ENCODE measurements at regions of chr10 and their contacts with region 1.

Region 1: DNA sequence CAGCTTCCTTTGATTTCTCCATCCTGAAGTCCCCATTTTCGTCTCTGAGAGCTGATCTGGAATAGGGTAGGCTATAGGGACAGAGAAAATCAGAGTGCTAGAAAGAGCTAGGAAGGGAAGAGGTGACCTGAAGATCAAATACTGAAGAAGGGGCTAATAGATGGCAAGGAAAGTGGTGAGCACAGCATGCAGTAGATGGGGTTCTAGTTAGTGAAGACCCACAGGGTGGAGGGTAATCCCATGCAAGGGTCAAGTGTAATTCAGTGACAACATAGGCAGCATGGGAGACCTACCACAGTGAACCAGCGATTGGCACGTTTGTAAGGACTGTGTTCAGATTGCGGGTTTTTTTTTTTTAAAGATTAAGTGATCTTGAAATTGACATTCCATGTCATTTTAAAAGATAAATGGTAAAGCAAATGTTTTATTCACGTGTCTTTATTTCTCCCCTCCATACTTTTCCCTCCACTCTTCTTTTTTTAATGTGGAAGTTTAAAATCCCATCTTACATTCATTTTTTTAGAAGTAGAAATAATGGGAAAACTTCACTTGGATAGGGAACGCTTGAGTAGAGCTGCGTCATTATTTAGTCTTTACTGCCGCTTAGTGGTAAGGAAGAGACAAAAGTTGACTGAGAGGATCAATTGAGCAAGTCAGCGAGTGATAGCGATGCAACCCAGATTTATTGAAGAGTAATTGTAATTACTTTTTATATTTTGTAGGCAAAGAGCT is 21.0 kb upstream of the ABI1 start:
- DNase-seq: no peak
- ATAC-seq: peak; percentile 76
- H3K4me3 Mint-ChIP-seq: no peak overlapping the region
- H3K27ac Mint-ChIP-seq: no peak overlapping the region
- H3K4me1 Mint-ChIP-seq: peaks cover 5% of the 10 kb centered on the region
- H3K27me3 Mint-ChIP-seq: peaks cover 35% of the 10 kb centered on the region

Region 2: GRCh38 chr10:26334932-26335573 is 546.7 kb before region 1 on chr10:
- CTCF ChIA-PET with region 1: interaction called, 22 read pairs
- DNase-seq: peak; percentile 76
- ATAC-seq: peak; percentile 91
- H3K4me3 Mint-ChIP-seq: peak overlapping the region; percentile 73
- H3K27ac Mint-ChIP-seq: peak overlapping the region; percentile 81
- H3K4me1 Mint-ChIP-seq: peaks cover 8% of the 10 kb centered on the region
- H3K27me3 Mint-ChIP-seq: no peaks in the 10 kb centered on the region

Region 3: GRCh38 chr10:26685441-26685840 is 196.3 kb before region 1 on chr10:
- CTCF ChIA-PET with region 1: interaction called, 10 read pairs
- DNase-seq: no peak
- ATAC-seq: no peak
- H3K4me3 Mint-ChIP-seq: no peak overlapping the region
- H3K27ac Mint-ChIP-seq: no peak overlapping the region
- H3K4me1 Mint-ChIP-seq: peaks cover 7% of the 10 kb centered on the region
- H3K27me3 Mint-ChIP-seq: peaks cover 10% of the 10 kb centered on the region

Region 4: DNA sequence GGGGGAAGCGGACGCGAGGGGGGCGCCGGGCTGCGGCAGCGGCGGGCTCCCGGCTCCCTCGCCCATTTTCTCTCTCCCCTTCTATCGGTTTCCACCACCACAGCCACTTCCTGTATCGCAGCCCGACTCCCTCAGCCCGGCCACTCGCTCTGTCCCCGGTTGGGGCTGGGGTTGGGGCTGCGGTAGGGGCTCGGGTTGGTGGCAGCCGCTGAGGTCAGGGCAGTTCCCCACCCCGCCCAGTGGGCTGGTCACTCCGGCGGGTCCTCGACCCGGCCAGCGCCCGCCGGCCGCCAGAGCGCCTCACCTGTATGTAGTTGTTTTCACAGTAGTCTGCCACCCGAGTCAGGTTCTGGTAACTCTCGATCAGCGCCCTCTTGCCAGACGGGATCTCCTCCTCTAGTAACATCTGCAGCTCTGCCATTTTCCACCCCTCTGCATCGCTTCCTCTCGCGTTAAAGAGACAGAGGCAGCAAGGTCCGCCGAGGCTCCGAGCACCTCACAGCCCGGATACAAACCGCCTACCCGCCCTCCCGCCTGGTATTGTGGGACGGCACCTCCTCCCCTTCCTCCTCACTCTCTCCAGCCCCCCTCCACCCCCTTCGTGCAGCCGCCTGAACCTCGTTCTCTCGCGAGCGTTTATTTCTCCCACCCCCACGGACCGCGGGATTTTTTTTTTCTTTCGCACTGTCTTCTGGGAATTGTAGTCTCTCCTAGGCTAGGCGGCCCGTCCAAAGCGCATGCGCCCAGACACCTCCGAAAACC is 21.1 kb before region 1 on chr10 and contains the start of gene ABI1:
- CTCF ChIA-PET with region 1: interaction called, 13 read pairs
- DNase-seq: peak; percentile 98
- ATAC-seq: peak; percentile 86
- H3K4me3 Mint-ChIP-seq: peak within 1 kb of the TSS; percentile 84
- H3K27ac Mint-ChIP-seq: peak within 1 kb of the TSS; percentile 99
- H3K4me1 Mint-ChIP-seq: peaks cover 29% of the 10 kb centered on the region
- H3K27me3 Mint-ChIP-seq: peaks cover 9% of the 10 kb centered on the region
- total RNA-seq, gene ABI1: 55.1 to 55.4 TPM